BJ (cell line): ENCODE measurements at regions of chr5 and their contacts with region 1.

Region 1: DNA sequence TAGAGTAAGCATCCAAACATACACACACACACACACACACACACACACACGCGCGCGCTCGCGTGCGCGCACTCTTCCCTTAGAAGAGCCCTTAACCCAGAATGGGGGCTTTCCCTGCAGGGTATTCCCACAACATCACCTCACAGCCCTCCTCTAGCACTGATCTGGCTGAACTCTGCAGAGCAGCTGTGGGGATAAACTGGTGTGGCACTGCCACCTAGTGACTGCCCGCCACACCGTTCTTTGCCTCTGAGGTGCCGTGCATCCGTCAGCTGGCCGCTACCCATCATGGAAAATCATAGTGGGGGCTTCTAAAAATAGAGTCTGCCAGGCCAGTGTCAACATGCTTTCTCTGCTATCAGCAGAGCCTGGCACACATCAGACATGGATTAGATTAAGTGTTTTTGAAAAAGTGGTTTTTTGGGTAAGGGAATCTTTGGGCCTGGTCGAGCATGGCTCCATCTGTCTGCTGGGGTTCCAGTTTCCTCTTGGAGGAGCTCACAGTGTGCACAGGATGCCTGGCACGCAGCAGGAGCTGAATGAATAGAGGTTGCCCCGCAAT is 88.1 kb downstream of the KCNN2 start:
- DNase-seq: no peak
- H3K4me3 ChIP-seq: no peak overlapping the region
- H3K27me3 ChIP-seq: no peaks in the 10 kb centered on the region
- CTCF ChIP-seq: peak; percentile 90

Region 2: DNA sequence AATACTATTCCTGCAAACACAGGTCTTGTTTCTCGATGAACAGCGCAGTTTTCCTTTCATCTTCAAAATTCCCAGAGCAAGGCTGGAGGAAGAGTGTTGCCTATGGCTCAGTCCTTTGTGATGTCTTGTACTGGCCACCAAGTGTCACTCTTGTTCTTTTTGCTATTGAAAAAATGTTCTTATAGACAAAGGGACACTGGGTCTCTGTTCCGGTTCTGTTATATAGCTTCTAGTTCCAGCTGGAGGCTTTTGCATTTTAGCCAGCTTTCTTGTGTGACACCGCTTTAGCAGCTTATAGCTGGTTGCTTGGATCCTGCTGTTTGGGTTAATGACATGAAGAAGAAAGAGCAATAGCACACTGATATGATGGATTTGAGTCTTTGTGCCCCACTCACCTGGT is 431.8 kb before region 1 on chr5:
- CTCF ChIA-PET with region 1: interaction called, 12 read pairs
- POLR2A ChIA-PET with region 1: no interaction called
- DNase-seq: no peak
- H3K4me3 ChIP-seq: no peak overlapping the region
- H3K27me3 ChIP-seq: no peaks in the 10 kb centered on the region
- CTCF ChIP-seq: peak; percentile 38; the same call in 1 of the 2 replicates

Region 3: DNA sequence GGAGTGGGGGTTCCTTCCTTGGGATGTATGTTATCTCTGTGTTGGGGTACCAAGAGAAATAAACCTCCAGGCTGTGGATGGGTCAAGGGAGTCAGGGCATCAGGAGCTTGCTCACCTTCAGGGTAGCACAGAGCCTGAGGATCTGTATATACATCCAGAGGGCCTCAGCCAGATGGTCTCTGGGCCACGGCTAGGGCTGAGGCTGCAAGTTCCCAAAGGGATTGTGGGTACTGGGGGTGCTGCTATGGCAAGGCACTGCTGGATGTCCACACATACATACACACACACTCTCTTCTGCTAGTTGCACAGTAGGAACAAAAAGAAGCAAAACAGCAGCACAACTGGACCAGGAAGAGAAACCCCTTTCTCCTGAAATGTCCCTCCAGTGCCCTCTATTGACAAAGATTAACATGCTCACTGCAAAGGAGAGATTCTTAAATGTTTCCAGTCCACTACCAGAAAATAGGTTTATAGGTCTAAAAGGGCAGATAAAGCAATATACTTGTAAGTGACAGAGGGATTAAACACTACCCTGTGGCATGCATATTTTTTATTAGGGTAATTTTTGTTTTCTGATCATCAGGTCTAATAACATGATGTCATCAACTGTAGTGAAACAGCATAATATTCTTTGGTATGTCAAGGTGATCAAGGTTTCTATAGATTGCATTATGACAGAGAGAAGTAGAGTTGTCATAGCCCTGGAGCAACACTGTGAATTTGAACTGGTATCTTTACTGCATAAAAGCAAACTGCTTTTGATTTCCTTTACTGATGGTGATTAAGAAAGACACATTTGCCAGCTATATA is 144.3 kb before region 1 on chr5:
- CTCF ChIA-PET with region 1: interaction called, 15 read pairs
- POLR2A ChIA-PET with region 1: no interaction called
- DNase-seq: peak; percentile 12
- H3K4me3 ChIP-seq: no peak overlapping the region
- H3K27me3 ChIP-seq: no peaks in the 10 kb centered on the region
- CTCF ChIP-seq: peak; percentile 75

Region 4: GRCh38 chr5:114435885-114436299 is 14.0 kb before region 1 on chr5:
- CTCF ChIA-PET with region 1: interaction called, 35 read pairs
- POLR2A ChIA-PET with region 1: no interaction called
- DNase-seq: no peak
- H3K4me3 ChIP-seq: no peak overlapping the region
- H3K27me3 ChIP-seq: no peaks in the 10 kb centered on the region
- CTCF ChIP-seq: no peak